CD8-positive, alpha-beta memory T cell (primary cell): ENCODE measurements at regions of chr5 and their contacts with region 1.

Region 1: GRCh38 chr5:157148734-157149615 is 6.3 kb upstream of the MED7 start:
- DNase-seq: peak; percentile 68 to 86 (median 79)
- H3K4me3 ChIP-seq: no peak overlapping the region
- H3K4me3 Mint-ChIP-seq: peak overlapping the region in 3 of 7 donors; percentile 13 to 71 (median 25)
- H3K27ac ChIP-seq: no peak overlapping the region
- H3K27ac Mint-ChIP-seq: peak overlapping the region; percentile 37 to 94 (median 76)
- H3K4me1 ChIP-seq: peaks cover 34% of the 10 kb centered on the region
- H3K4me1 Mint-ChIP-seq: peaks cover 28 to 40% (median 40%) of the 10 kb centered on the region in 3 donors
- H3K27me3 ChIP-seq: no peaks in the 10 kb centered on the region
- H3K27me3 Mint-ChIP-seq: no peaks in the 10 kb centered on the region

Region 2: GRCh38 chr5:156655732-156656131 is 493.2 kb before region 1 on chr5:
- CTCF ChIA-PET with region 1: no interaction called
- POLR2A ChIA-PET with region 1: no interaction called
- DNase-seq: no peak
- H3K4me3 ChIP-seq: no peak overlapping the region
- H3K4me3 Mint-ChIP-seq: no peak overlapping the region
- H3K27ac ChIP-seq: no peak overlapping the region
- H3K27ac Mint-ChIP-seq: no peak overlapping the region
- H3K4me1 ChIP-seq: no peaks in the 10 kb centered on the region
- H3K4me1 Mint-ChIP-seq: no peaks in the 10 kb centered on the region
- H3K27me3 ChIP-seq: no peaks in the 10 kb centered on the region
- H3K27me3 Mint-ChIP-seq: peaks cover 7 to 9% of the 10 kb centered on the region in 2 donors

Region 3: DNA sequence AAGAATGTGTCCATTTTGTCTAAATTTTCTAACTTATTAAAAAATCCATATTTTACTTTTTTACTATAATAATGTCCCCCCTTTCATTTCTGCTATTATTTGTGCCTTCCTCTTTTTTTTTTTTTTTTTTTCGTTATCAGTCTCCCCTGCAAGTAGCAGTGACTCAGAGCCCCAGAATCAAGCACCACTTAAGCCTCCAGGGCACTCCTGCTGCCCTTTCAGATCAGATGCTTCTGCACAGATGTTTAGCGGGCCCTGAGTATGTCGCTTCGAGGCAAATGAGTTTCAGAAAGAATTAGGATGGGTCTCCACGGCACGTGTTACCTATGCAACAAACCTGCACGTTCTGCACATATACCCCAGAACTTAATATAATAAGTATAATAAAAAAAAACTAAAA is 18.1 kb before region 1 on chr5:
- CTCF ChIA-PET with region 1: no interaction called
- POLR2A ChIA-PET with region 1: no interaction called
- DNase-seq: no peak
- H3K4me3 ChIP-seq: no peak overlapping the region
- H3K4me3 Mint-ChIP-seq: no peak overlapping the region
- H3K27ac ChIP-seq: no peak overlapping the region
- H3K27ac Mint-ChIP-seq: no peak overlapping the region
- H3K4me1 ChIP-seq: no peaks in the 10 kb centered on the region
- H3K4me1 Mint-ChIP-seq: peaks cover 3 to 19% (median 5%) of the 10 kb centered on the region in 3 donors
- H3K27me3 ChIP-seq: no peaks in the 10 kb centered on the region
- H3K27me3 Mint-ChIP-seq: peaks cover 0 to 3% of the 10 kb centered on the region in 2 donors

Region 4: GRCh38 chr5:157180374-157181264 is 31.6 kb after region 1 on chr5 and contains the start of gene ITK:
- CTCF ChIA-PET with region 1: interaction called, 46 read pairs
- POLR2A ChIA-PET with region 1: interaction called, 11 read pairs
- DNase-seq: peak in 4 of 5 donors; percentile 25 to 80 (median 73)
- H3K4me3 ChIP-seq: peak within 1 kb of the TSS; percentile 84
- H3K4me3 Mint-ChIP-seq: peak within 1 kb of the TSS; percentile 93 to 100 (median 97)
- H3K27ac ChIP-seq: peak within 1 kb of the TSS; percentile 79
- H3K27ac Mint-ChIP-seq: peak within 1 kb of the TSS; percentile 87 to 99 (median 97)
- H3K4me1 ChIP-seq: peaks cover 45% of the 10 kb centered on the region
- H3K4me1 Mint-ChIP-seq: peaks cover 54 to 64% (median 55%) of the 10 kb centered on the region in 3 donors
- H3K27me3 ChIP-seq: no peaks in the 10 kb centered on the region
- H3K27me3 Mint-ChIP-seq: no peaks in the 10 kb centered on the region
- total RNA-seq, gene ITK: 150 to 162 TPM

Region 5: GRCh38 chr5:157198277-157198986 is 49.5 kb after region 1 on chr5:
- CTCF ChIA-PET with region 1: interaction called, 24 read pairs
- POLR2A ChIA-PET with region 1: interaction called, 3 read pairs
- DNase-seq: peak in 4 of 5 donors; percentile 32 to 76 (median 49)
- H3K4me3 ChIP-seq: peak overlapping the region; percentile 23
- H3K4me3 Mint-ChIP-seq: peak overlapping the region; percentile 29 to 85 (median 70)
- H3K27ac ChIP-seq: no peak overlapping the region
- H3K27ac Mint-ChIP-seq: peak overlapping the region; percentile 82 to 97 (median 94)
- H3K4me1 ChIP-seq: peaks cover 98% of the 10 kb centered on the region
- H3K4me1 Mint-ChIP-seq: peaks cover 89 to 100% (median 100%) of the 10 kb centered on the region in 3 donors
- H3K27me3 ChIP-seq: no peaks in the 10 kb centered on the region
- H3K27me3 Mint-ChIP-seq: peaks cover 0 to 3% of the 10 kb centered on the region in 2 donors

Region 6: GRCh38 chr5:157219491-157220271 is 70.7 kb after region 1 on chr5:
- CTCF ChIA-PET with region 1: interaction called, 15 read pairs
- POLR2A ChIA-PET with region 1: interaction called, 5 read pairs
- DNase-seq: no peak
- H3K4me3 ChIP-seq: no peak overlapping the region
- H3K4me3 Mint-ChIP-seq: peak overlapping the region in 6 of 7 donors; percentile 24 to 67 (median 44)
- H3K27ac ChIP-seq: no peak overlapping the region
- H3K27ac Mint-ChIP-seq: peak overlapping the region; percentile 79 to 94 (median 87)
- H3K4me1 ChIP-seq: peaks cover 95% of the 10 kb centered on the region
- H3K4me1 Mint-ChIP-seq: peaks cover 81 to 96% (median 92%) of the 10 kb centered on the region in 3 donors
- H3K27me3 ChIP-seq: no peaks in the 10 kb centered on the region
- H3K27me3 Mint-ChIP-seq: no peaks in the 10 kb centered on the region

Region 7: DNA sequence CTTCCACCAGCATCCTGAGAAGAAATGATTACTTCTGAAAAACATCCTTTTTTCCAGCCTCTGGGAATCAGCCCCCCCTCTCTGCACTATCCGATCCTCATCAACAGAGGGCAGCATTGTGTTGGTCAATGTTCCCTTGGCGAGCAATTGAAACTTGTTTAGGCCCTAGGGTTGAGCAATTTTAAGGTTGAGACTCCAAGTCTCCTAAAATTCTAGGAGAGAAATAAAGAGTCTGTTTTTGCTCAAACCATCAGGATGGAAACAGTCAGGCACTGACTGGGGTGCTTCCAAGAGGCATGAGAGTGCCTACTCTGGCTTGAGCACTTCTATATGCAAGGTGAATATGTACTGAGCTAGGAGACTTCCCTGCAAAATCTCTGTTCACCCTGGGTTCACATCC is 104.6 kb after region 1 on chr5:
- CTCF ChIA-PET with region 1: interaction called, 27 read pairs
- POLR2A ChIA-PET with region 1: interaction called, 9 read pairs
- DNase-seq: no peak
- H3K4me3 ChIP-seq: peak overlapping the region; percentile 8
- H3K4me3 Mint-ChIP-seq: peak overlapping the region in 6 of 7 donors; percentile 63 to 82 (median 74)
- H3K27ac ChIP-seq: peak overlapping the region; percentile 48
- H3K27ac Mint-ChIP-seq: peak overlapping the region; percentile 84 to 99 (median 92)
- H3K4me1 ChIP-seq: peaks cover 98% of the 10 kb centered on the region
- H3K4me1 Mint-ChIP-seq: peaks cover 93 to 99% (median 96%) of the 10 kb centered on the region in 3 donors
- H3K27me3 ChIP-seq: no peaks in the 10 kb centered on the region
- H3K27me3 Mint-ChIP-seq: peaks cover 0 to 5% of the 10 kb centered on the region in 2 donors

Region 8: GRCh38 chr5:157312492-157312891 is 163.5 kb after region 1 on chr5:
- CTCF ChIA-PET with region 1: interaction called, 12 read pairs
- POLR2A ChIA-PET with region 1: no interaction called
- DNase-seq: peak; percentile 24 to 73 (median 50)
- H3K4me3 ChIP-seq: no peak overlapping the region
- H3K4me3 Mint-ChIP-seq: no peak overlapping the region
- H3K27ac ChIP-seq: no peak overlapping the region
- H3K27ac Mint-ChIP-seq: peak overlapping the region; percentile 17 to 87 (median 82)
- H3K4me1 ChIP-seq: peaks cover 40% of the 10 kb centered on the region
- H3K4me1 Mint-ChIP-seq: peaks cover 29 to 46% (median 41%) of the 10 kb centered on the region in 3 donors
- H3K27me3 ChIP-seq: no peaks in the 10 kb centered on the region
- H3K27me3 Mint-ChIP-seq: no peaks in the 10 kb centered on the region